Psoas muscle (tissue), 8 donors: ENCODE measurements at regions of chr1 and their contacts with region 1.

Region 1: GRCh38 chr1:156129706-156130581 is 15.4 kb downstream of the LMNA start:
- DNase-seq: peak; percentile 89 to 93
- ATAC-seq: peak; percentile 77 to 81 (median 80)
- H3K4me3 ChIP-seq: peak overlapping the region; percentile 45
- H3K27ac ChIP-seq: peak overlapping the region; percentile 99
- H3K4me1 ChIP-seq: peaks cover 57% of the 10 kb centered on the region
- H3K27me3 ChIP-seq: no peaks in the 10 kb centered on the region
- CTCF ChIP-seq: peak; percentile 98

Region 2: DNA sequence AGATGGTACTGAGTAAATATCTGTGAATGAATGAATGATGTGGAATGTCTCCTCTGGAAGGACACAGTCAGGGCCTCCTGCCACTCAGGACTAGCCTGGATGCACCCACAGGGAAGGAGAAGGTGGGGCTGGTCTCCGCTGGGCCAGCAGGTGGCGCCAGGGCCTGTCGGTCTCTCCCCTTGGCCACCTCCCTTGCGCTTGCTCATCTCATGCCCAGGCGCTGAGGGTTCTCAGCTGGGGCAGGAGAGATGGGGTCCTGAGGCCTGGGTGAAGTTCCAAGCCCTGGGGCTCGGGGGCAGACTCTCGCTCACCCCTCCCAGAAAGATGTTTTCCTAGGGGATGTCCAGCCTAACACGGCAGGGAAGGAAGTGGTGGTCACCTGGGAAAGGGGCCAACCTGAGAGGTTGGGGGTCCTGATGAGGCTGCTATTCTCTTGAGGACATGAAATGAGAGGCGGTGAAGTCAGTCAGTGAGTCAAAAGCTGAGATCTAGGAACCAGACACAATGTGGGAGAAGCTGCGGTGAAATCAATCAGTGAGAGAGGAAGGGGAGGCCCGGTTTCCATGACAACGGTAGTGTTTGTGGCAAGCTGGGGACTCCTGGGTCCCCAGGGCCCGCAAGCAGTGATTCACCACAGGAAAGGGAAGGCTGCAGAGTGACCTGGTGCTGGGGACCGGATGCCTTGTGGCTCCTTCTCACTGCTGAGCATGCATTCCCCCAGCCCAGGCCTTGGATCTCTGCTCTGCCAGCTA is 33.1 kb before region 1 on chr1:
- intact Hi-C with region 1: loop called (anchors 1 to 2 kb)
- DNase-seq: peak; percentile 93 to 96
- ATAC-seq: peak; percentile 98 to 100 (median 98)
- H3K4me3 ChIP-seq: no peak overlapping the region
- H3K27ac ChIP-seq: peak overlapping the region; percentile 53
- H3K4me1 ChIP-seq: peaks cover 17% of the 10 kb centered on the region
- H3K27me3 ChIP-seq: no peaks in the 10 kb centered on the region
- CTCF ChIP-seq: peak; percentile 95